GM10248 (cell line): ENCODE measurements at regions of chr3 and their contacts with region 1.

Region 1: DNA sequence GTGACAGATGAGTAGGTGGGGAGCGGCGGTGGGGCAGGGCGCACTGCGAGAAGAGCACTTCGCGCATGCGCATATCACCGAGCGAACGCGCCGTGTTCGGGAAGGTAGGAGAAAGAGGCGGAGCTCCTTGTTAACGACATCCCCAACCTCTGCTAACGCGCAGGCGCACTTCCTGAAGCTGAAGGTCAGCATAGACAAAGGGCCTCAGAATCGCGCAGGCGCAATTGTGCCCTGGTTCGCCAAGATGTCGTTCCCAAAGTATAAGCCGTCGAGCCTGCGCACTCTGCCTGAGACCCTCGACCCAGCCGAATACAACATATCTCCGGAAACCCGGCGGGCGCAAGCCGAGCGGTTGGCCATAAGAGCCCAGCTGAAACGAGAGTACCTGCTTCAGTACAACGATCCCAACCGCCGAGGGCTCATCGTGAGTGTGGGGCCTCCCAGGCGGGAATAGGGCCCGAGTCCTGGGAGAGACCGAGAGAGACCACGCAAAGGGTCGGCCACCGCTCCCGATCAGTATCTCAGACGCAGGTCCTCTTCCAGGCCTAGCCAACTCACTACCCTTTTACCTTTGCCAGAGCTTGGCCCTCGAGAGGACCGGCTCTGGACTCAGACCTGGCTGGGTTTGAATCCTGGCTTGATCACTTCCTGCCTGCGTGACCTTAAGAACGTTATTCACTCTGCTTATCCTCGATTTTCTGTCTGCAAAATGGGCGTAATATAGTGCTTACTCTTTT is at the start of gene NDUFB4:
- DNase-seq: peak; percentile 98
- CTCF ChIP-seq: no peak

Region 2: GRCh38 chr3:120558771-120559241 is 37.5 kb before region 1 on chr3:
- CTCF ChIA-PET with region 1: interaction called, 20 read pairs
- POLR2A ChIA-PET with region 1: no interaction called
- DNase-seq: peak; percentile 82
- CTCF ChIP-seq: peak; percentile 99

Region 3: GRCh38 chr3:120567370-120568201 is 28.7 kb before region 1 on chr3:
- CTCF ChIA-PET with region 1: interaction called, 17 read pairs
- POLR2A ChIA-PET with region 1: interaction called, 3 read pairs
- DNase-seq: no peak
- CTCF ChIP-seq: peak; percentile 42